ENCODE measurements at regions of chr5 and their contacts with region 1.

Region 1: GRCh38 chr5:132238169-132238744 is 10.6 kb upstream of the P4HA2 start:
- DNase-seq: peak; percentile 89
- H3K4me3 Mint-ChIP-seq: no peak overlapping the region
- H3K27ac Mint-ChIP-seq: no peak overlapping the region
- H3K4me1 Mint-ChIP-seq: no peaks in the 10 kb centered on the region
- H3K27me3 Mint-ChIP-seq: peaks cover 5% of the 10 kb centered on the region

Region 2: GRCh38 chr5:131488463-131488862 is 749.8 kb before region 1 on chr5:
- CTCF ChIA-PET with region 1: no interaction called
- intact Hi-C with region 1: no loop called
- DNase-seq: no peak
- H3K4me3 Mint-ChIP-seq: no peak overlapping the region
- H3K27ac Mint-ChIP-seq: peak overlapping the region; percentile 65
- H3K4me1 Mint-ChIP-seq: peaks cover 49% of the 10 kb centered on the region
- H3K27me3 Mint-ChIP-seq: no peaks in the 10 kb centered on the region

Region 3: GRCh38 chr5:132205385-132206125 is 32.7 kb before region 1 on chr5:
- CTCF ChIA-PET with region 1: interaction called, 10 read pairs
- intact Hi-C with region 1: no loop called
- DNase-seq: no peak
- H3K4me3 Mint-ChIP-seq: no peak overlapping the region
- H3K27ac Mint-ChIP-seq: no peak overlapping the region
- H3K4me1 Mint-ChIP-seq: no peaks in the 10 kb centered on the region
- H3K27me3 Mint-ChIP-seq: peaks cover 4% of the 10 kb centered on the region

Region 4: DNA sequence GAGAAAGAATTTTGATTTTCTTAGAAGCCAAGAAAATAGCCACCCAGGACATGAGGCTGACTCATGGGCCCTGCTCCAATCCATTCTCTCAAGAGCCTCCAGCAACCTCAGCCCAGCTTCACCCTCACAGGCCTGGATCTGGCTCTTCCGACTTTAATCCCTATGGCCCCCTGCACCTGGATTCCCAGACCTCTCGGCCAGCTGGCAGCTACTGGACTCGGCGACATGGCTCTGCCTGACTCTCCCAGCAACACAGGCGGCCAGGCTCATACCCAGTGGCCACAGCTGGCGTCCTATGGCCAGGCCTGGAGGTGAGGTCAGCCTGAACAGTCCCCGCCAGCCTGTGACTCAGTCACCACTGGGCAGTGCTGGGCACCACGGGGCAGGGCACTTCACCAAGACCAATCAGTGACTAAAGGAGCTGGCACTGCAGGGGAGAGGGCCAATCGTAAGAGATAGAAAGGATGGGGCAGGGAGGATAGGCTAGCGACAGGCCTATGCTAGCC is 13.0 kb after region 1 on chr5:
- CTCF ChIA-PET with region 1: interaction called, 52 read pairs
- intact Hi-C with region 1: no loop called
- DNase-seq: peak; percentile 2
- H3K4me3 Mint-ChIP-seq: no peak overlapping the region
- H3K27ac Mint-ChIP-seq: no peak overlapping the region
- H3K4me1 Mint-ChIP-seq: no peaks in the 10 kb centered on the region
- H3K27me3 Mint-ChIP-seq: peaks cover 4% of the 10 kb centered on the region

Region 5: GRCh38 chr5:132272311-132273210 is 34.3 kb after region 1 on chr5:
- CTCF ChIA-PET with region 1: interaction called, 13 read pairs
- intact Hi-C with region 1: loop called (anchors 5 kb)
- DNase-seq: peak; percentile 82
- H3K4me3 Mint-ChIP-seq: no peak overlapping the region
- H3K27ac Mint-ChIP-seq: no peak overlapping the region
- H3K4me1 Mint-ChIP-seq: peaks cover 12% of the 10 kb centered on the region
- H3K27me3 Mint-ChIP-seq: peaks cover 20% of the 10 kb centered on the region

Region 6: DNA sequence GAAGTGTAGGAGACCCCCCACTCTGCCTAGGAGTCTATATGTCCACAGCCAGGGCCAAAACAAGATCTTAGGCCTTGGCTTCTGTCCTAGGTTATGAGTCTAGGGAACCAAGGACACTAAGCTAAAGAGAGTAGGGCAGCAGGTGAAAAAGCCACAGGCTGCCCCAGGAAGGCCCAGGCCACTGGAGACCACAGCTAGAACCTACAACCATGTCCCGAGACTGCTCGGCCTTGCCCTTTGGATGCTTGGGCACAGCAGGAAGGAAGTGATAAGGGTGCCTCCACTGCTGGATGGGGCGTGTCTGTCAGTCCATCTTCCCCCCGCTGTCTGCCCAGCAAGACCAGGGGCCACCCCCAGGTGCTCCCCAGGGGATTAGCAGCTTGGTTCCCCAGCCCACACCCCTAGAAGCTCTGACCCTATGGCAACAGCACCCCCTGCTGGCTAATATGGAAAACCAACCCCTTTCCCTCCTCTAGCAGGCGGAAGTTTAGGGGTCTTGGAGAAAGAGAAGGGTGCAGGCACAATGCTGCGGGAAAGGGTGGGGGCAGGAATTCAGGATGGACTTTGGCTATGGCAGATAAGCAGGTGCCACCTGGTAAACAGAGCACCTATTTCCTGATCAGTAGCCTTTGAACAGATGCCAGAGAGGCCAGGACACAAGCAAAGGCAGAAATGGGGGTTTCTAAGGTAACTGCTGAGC is 262.8 kb after region 1 on chr5:
- CTCF ChIA-PET with region 1: interaction called, 20 read pairs
- intact Hi-C with region 1: loop called (anchors 1 kb)
- DNase-seq: peak; percentile 86
- H3K4me3 Mint-ChIP-seq: no peak overlapping the region
- H3K27ac Mint-ChIP-seq: no peak overlapping the region
- H3K4me1 Mint-ChIP-seq: peaks cover 19% of the 10 kb centered on the region
- H3K27me3 Mint-ChIP-seq: no peaks in the 10 kb centered on the region

Measured in activated naive CD4-positive, alpha-beta T cell treated with anti-CD3 and anti-CD28 coated beads for 36 hours (primary cell).